H1 (cell line): ENCODE measurements at regions of chr22 and their contacts with region 1.

Region 1: GRCh38 chr22:39306581-39307361 is 12.7 kb downstream of the RPL3 start:
- DNase-seq: peak in 1 of 2 experiments; percentile 83
- H3K4me3 ChIP-seq: no peak overlapping the region
- H3K27ac ChIP-seq: no peak overlapping the region
- H3K4me1 ChIP-seq: peaks cover 0 to 14% (median 11%) of the 10 kb centered on the region in 4 experiments; a peak in 5 of 7 replicates
- H3K27me3 ChIP-seq: no peaks in the 10 kb centered on the region
- CTCF ChIP-seq: peak; percentile 82 to 86 (median 83)
- EP300 ChIP-seq: no peak
- POLR2A ChIP-seq: no peak
- RAD21 ChIP-seq: peak; percentile 84 to 87

Region 2: DNA sequence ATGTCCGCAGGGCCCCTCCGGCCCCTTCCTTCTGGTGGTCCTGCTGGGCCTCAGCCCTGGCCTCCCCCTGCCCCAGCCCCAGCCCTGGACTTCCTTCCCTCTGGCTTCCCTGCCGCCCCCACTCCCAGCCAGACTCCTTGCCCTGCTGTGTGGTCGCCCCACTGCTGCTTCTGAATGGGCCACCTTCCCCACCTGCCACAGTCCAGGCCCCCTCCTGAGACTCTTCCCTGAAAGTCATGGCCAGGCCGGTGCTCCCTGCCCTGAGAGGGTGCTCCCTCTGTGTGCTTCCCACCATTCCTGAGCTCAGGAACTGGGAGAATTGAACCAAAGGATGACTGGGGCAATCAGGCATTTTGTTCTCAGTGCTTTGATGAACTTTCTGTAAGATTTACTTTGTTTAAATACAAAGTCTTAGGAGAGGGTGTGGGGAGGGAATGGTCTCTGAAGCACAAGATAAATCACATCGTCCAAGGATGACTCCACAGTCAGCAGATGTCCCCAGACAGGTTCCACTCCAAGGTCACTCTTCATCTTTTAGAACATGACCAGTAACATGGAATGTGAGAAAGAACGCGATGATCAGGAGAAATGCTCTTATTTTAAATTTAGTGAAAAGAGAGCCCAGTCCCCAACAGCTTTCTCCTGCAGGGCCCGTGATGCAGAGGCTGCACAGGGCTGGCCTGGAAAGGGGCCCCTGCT is 285.1 kb before region 1 on chr22:
- CTCF ChIA-PET with region 1: no interaction called
- POLR2A ChIA-PET with region 1: no interaction called
- DNase-seq: no peak
- H3K4me3 ChIP-seq: no peak overlapping the region
- H3K27ac ChIP-seq: no peak overlapping the region
- H3K4me1 ChIP-seq: peaks cover 0 to 26% (median 19%) of the 10 kb centered on the region in 4 experiments; a peak in 6 of 7 replicates
- H3K27me3 ChIP-seq: no peaks in the 10 kb centered on the region
- CTCF ChIP-seq: no peak
- EP300 ChIP-seq: no peak
- POLR2A ChIP-seq: no peak
- RAD21 ChIP-seq: no peak

Region 3: DNA sequence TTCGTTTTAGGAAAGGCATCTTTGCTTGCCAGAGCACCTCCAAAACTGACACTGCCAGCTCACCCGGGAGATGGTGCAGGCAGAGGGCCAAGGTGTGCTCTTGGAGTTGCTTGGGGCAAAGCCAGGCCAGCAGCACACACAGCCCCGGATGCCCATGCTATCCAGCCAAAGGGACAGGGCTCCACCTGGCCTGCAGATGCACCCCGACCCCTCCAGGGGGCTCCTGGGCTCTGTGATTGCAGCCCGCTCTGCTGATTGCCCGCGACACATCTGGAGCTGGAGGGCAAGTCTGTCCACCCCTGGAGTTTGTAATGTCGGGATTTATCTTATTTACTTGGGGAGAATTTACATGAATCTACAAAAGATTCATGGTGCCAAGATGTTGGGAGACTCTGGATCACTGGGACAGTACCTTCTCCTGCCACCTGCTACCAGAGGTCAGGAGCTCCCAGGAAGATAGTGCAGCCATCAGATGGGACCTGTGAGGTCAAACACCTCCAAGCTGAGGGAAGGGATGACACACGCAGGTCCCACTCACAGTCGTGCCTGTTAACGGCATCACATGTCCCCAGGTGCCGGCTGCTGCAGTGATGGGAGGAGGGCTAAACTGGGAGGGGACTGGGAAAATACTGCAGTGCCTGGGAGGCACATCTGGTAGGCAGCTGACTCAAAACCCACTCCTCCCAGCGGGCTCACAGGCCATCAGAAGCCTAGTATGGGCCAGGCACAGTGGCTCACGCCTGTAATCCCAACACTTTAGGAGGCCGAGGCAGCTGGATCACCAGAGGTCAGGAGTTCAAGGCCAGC is 171.5 kb before region 1 on chr22:
- CTCF ChIA-PET with region 1: interaction called, 28 read pairs
- POLR2A ChIA-PET with region 1: interaction called, 15 read pairs
- DNase-seq: peak; percentile 50 to 90
- H3K4me3 ChIP-seq: no peak overlapping the region
- H3K27ac ChIP-seq: no peak overlapping the region
- H3K4me1 ChIP-seq: peaks cover 4 to 17% (median 11%) of the 10 kb centered on the region in 4 experiments; a peak in 4 of 7 replicates
- H3K27me3 ChIP-seq: no peaks in the 10 kb centered on the region
- CTCF ChIP-seq: peak; percentile 85 to 92 (median 92)
- EP300 ChIP-seq: no peak
- POLR2A ChIP-seq: no peak
- RAD21 ChIP-seq: peak; percentile 88 to 94

Region 4: GRCh38 chr22:39183991-39184585 is 122.7 kb before region 1 on chr22:
- CTCF ChIA-PET with region 1: interaction called, 9 read pairs
- POLR2A ChIA-PET with region 1: interaction called, 19 read pairs
- DNase-seq: no peak
- H3K4me3 ChIP-seq: no peak overlapping the region
- H3K27ac ChIP-seq: no peak overlapping the region
- H3K4me1 ChIP-seq: peaks cover 0 to 18% (median 7%) of the 10 kb centered on the region in 4 experiments; a peak in 6 of 7 replicates
- H3K27me3 ChIP-seq: no peaks in the 10 kb centered on the region
- CTCF ChIP-seq: no peak
- EP300 ChIP-seq: no peak
- POLR2A ChIP-seq: no peak; a peak in 1 of 3 replicates
- RAD21 ChIP-seq: no peak

Region 5: DNA sequence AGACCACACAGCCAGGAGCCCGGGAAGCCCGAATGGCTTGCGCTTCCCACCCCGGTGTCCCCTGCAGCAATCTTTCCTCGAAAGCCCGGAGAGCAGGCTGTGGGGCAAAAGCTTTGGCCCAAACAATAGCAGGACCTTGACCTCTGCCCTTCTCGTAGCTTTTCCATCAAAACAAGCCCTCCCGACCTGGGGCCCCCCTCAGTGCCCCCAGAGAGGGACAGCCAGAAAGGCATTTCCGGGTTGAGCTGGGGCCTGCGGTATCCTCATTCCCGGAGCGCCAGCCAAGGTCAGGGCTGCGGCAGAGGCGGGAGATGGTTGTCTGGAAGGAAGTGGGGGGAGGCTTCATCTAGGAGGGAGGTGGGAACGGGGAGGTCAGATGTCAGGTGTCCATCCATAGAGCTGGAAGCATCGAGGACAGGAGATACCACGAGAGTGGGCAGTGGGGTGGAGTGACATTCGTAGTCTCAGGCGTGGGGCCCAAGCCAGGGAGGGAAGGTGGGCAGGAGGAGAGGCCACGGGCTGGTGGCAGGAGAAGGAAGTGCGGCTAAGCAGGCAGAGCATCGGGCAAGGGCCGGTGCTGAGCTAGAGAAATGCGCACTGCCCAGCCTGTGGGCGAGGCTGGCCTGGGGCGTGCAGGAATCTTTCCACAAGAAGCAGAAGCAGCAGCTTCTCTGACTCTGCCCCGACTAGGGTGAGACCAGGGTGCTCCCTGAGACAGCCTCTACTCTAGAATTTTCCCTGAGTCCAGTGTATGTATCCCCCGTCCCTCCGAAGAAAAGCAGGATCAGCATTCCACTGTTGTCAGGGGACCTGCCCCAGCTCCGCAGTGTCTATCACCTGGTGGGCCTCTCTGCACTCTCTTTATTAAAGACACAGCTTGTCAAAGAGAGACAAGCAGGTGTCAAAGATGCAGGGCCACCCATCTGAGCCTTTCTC is 76.2 kb before region 1 on chr22:
- CTCF ChIA-PET with region 1: interaction called, 17 read pairs
- POLR2A ChIA-PET with region 1: interaction called, 34 read pairs
- DNase-seq: peak in 1 of 2 experiments; percentile 81
- H3K4me3 ChIP-seq: peak overlapping the region in 1 of 4 experiments; percentile 27; a peak in 3 of 8 replicates
- H3K27ac ChIP-seq: no peak overlapping the region
- H3K4me1 ChIP-seq: peaks cover 4 to 42% (median 31%) of the 10 kb centered on the region in 4 experiments
- H3K27me3 ChIP-seq: peaks cover 0 to 19% (median 6%) of the 10 kb centered on the region in 4 experiments; a peak in 5 of 7 replicates
- CTCF ChIP-seq: peak; percentile 0 to 40 (median 20); a peak in 2 of 4 replicates
- EP300 ChIP-seq: no peak
- POLR2A ChIP-seq: no peak
- RAD21 ChIP-seq: no peak; a peak in 1 of 4 replicates

Region 6: DNA sequence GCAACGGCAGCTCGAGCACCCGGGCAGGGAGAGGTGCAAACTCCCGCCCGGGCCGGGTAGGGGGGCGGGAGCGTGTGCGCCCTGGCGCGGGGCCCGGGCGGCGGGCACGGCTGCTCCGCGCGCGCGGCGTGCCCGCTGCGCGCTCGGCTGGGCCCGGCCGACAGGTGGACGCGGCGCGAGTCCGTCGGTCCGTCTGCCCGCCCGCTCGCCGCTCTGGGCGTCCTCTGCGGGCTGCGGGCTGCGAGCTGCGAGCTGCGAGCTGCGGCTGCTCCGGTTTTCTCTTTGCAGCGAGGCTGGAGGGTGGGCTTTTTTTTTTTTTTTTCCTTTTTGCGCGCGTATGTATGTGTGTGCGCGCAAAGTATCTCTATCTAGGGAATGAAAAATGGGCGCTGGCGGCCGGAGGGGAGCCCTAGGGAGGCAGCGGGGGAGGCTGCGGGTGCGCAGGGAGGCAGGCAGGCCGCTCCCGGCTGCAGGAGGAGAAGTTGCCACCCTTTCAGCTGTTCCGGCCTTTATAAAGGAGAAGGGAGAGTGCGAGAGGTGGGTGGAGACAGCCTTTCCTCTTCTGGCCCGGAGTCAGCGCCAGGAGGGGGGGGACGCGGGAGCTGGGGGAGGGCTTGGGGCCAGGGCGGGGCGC is 62.2 kb before region 1 on chr22 and contains the start of gene PDGFB:
- CTCF ChIA-PET with region 1: interaction called, 12 read pairs
- POLR2A ChIA-PET with region 1: interaction called, 13 read pairs
- DNase-seq: no peak
- H3K4me3 ChIP-seq: peak within 1 kb of the TSS; percentile 16 to 73 (median 56)
- H3K27ac ChIP-seq: no peak within 1 kb of the TSS
- H3K4me1 ChIP-seq: peaks cover 0 to 20% (median 18%) of the 10 kb centered on the region in 4 experiments; a peak in 6 of 7 replicates
- H3K27me3 ChIP-seq: peaks cover 26 to 81% (median 64%) of the 10 kb centered on the region in 4 experiments
- CTCF ChIP-seq: no peak
- EP300 ChIP-seq: no peak
- POLR2A ChIP-seq: no peak
- RAD21 ChIP-seq: no peak
- total RNA-seq, gene PDGFB: 8.5 and 9.6 TPM in 2 replicates

Region 7: DNA sequence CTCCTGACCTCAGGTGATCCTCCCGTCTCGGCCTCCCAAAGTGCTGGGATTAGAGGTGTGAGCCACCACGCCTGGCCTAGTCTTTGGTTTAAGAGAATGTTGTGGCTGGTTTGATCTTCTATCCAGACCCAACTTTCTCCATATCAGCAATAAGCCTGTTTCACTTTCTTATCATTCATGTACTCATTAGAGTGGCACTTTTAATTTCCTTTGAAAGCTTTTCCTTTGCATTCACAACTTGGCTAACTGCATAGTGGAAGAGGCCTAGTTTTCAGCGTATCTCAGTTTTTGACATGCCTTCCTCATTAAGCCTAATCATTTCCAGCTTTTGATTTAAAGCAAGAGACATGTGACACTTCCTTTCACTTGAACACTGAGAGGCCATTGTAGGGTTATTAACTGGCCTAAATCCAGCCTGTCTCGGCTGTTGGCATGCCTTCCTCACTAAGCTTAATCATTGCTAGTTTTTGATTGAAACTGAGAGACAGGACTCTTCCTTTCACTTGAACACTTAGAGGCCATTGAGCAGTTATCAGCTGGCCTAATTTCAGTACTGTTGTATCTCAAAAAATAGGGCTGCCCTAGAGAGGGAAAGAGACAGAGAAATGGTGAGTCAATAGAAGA is 25.8 kb after region 1 on chr22:
- CTCF ChIA-PET with region 1: interaction called, 26 read pairs
- POLR2A ChIA-PET with region 1: interaction called, 472 read pairs
- DNase-seq: no peak
- H3K4me3 ChIP-seq: no peak overlapping the region
- H3K27ac ChIP-seq: no peak overlapping the region
- H3K4me1 ChIP-seq: no peaks in the 10 kb centered on the region
- H3K27me3 ChIP-seq: no peaks in the 10 kb centered on the region
- CTCF ChIP-seq: no peak
- EP300 ChIP-seq: no peak
- POLR2A ChIP-seq: no peak
- RAD21 ChIP-seq: no peak

Region 8: DNA sequence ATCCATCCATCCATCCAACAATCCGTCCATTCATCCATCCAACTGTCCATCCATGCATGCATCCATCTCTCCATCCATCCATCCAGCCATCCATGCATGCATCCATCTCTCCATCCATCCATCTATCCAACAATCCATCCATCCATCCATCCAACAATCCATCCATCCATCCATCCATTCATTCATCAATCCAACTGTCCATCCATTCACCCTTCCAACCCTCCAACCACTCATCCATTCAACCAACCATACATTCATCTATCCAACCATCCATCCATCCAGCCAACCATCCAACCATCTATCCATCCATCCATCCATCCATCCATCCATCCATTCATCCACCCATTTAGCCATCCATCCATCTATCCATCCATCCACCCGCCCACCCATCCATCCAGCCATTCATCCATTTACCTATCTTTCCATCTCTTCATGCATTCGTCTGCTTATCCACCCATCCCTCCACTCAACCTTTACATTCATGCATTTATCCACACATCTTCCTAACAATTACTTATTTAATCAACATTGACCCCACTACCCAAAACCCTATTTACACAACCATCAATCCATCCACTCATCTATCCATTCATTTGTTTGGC is 276.4 kb after region 1 on chr22:
- CTCF ChIA-PET with region 1: no interaction called
- POLR2A ChIA-PET with region 1: no interaction called
- DNase-seq: no peak
- H3K4me3 ChIP-seq: no peak overlapping the region
- H3K27ac ChIP-seq: no peak overlapping the region
- H3K4me1 ChIP-seq: peaks cover 0 to 6% (median 2%) of the 10 kb centered on the region in 4 experiments; a peak in 2 of 7 replicates
- H3K27me3 ChIP-seq: peaks cover 0 to 2% (median 0%) of the 10 kb centered on the region in 4 experiments; a peak in 1 of 7 replicates
- CTCF ChIP-seq: no peak
- EP300 ChIP-seq: no peak
- POLR2A ChIP-seq: no peak
- RAD21 ChIP-seq: no peak